Activated naive CD4-positive, alpha-beta T cell treated with anti-CD3 and anti-CD28 coated beads for 36 hours (primary cell): ENCODE measurements at regions of chr13 and their contacts with region 1.

Region 1: GRCh38 chr13:99386911-99387788 is 80.0 kb upstream of the GPR183 start:
- DNase-seq: peak; percentile 96
- H3K4me3 Mint-ChIP-seq: no peak overlapping the region
- H3K27ac Mint-ChIP-seq: peak overlapping the region; percentile 85
- H3K4me1 Mint-ChIP-seq: peaks cover 72% of the 10 kb centered on the region
- H3K27me3 Mint-ChIP-seq: no peaks in the 10 kb centered on the region

Region 2: GRCh38 chr13:99176309-99177276 is 210.6 kb before region 1 on chr13:
- CTCF ChIA-PET with region 1: interaction called, 12 read pairs
- intact Hi-C with region 1: loop called (anchors 1 kb)
- DNase-seq: peak; percentile 87
- H3K4me3 Mint-ChIP-seq: peak overlapping the region; percentile 48
- H3K27ac Mint-ChIP-seq: no peak overlapping the region
- H3K4me1 Mint-ChIP-seq: peaks cover 35% of the 10 kb centered on the region
- H3K27me3 Mint-ChIP-seq: no peaks in the 10 kb centered on the region

Region 3: GRCh38 chr13:99314640-99315176 is 72.4 kb before region 1 on chr13:
- CTCF ChIA-PET with region 1: interaction called, 7 read pairs
- intact Hi-C with region 1: loop called (anchors 1 kb)
- DNase-seq: peak; percentile 92
- H3K4me3 Mint-ChIP-seq: peak overlapping the region; percentile 54
- H3K27ac Mint-ChIP-seq: peak overlapping the region; percentile 96
- H3K4me1 Mint-ChIP-seq: peaks cover 82% of the 10 kb centered on the region
- H3K27me3 Mint-ChIP-seq: no peaks in the 10 kb centered on the region

Region 4: GRCh38 chr13:99404005-99404755 is 17.0 kb after region 1 on chr13:
- CTCF ChIA-PET with region 1: interaction called, 53 read pairs
- intact Hi-C with region 1: no loop called
- DNase-seq: no peak
- H3K4me3 Mint-ChIP-seq: no peak overlapping the region
- H3K27ac Mint-ChIP-seq: no peak overlapping the region
- H3K4me1 Mint-ChIP-seq: peaks cover 51% of the 10 kb centered on the region
- H3K27me3 Mint-ChIP-seq: no peaks in the 10 kb centered on the region

Region 5: GRCh38 chr13:99425485-99426341 is 38.6 kb after region 1 on chr13:
- CTCF ChIA-PET with region 1: interaction called, 76 read pairs
- intact Hi-C with region 1: no loop called
- DNase-seq: peak; percentile 84
- H3K4me3 Mint-ChIP-seq: peak overlapping the region; percentile 74
- H3K27ac Mint-ChIP-seq: peak overlapping the region; percentile 97
- H3K4me1 Mint-ChIP-seq: peaks cover 63% of the 10 kb centered on the region
- H3K27me3 Mint-ChIP-seq: no peaks in the 10 kb centered on the region